ENCODE measurements at regions of chr11 and their contacts with region 1.

Region 1: GRCh38 chr11:44095506-44096394 is at the start of gene EXT2:
- DNase-seq: peak; percentile 85
- ATAC-seq: peak; percentile 94
- H3K4me3 Mint-ChIP-seq: peak within 1 kb of the TSS; percentile 87
- H3K27ac Mint-ChIP-seq: no peak within 1 kb of the TSS
- H3K4me1 Mint-ChIP-seq: peaks cover 24% of the 10 kb centered on the region
- H3K27me3 Mint-ChIP-seq: no peaks in the 10 kb centered on the region
- CTCF ChIP-seq: no peak
- total RNA-seq, gene EXT2: 21.9 and 22.1 TPM in 2 replicates

Region 2: DNA sequence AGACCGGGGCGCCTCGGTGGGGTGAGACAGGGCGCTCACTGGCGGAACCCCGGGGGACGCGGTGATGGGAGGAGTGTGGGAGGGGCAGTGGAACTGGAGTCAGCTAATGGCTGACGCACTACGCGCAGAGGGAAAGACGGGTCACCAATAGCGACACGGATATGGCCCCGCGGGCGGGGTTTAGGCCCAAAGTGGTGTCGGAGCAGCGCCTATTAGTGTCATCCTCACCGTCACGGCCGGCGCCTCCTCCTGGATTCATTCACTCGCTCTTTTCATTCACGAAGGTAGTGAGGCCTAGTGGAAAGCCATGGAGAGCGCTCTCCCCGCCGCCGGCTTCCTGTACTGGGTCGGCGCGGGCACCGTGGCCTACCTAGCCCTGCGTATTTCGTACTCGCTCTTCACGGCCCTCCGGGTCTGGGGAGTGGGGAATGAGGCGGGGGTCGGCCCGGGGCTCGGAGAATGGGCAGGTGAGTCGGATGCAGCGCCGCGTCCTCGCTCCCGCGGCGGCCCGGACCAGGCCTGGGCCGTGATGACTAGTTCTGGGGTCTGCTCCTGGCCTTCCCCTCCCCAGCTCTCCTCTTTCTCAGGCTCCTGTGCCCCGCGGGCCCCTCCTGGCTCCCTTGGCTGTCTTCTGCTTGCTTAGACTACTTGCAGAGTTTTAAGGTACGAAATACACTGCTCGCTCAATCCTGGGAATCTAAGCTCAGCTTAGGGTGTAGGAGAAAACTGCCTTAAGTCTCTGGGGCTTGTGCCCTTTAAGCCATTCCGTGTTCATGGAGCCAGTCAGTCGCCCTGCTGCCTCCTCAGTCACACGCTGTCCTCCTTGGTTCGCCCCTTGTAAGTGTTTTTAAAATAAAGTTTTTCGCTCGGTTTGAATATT is 415.0 kb before region 1 on chr11 and contains the start of gene HSD17B12:
- CTCF ChIA-PET with region 1: no interaction called
- POLR2A ChIA-PET with region 1: no interaction called
- intact Hi-C with region 1: loop called (anchors 5 kb)
- DNase-seq: peak; percentile 96
- ATAC-seq: peak; percentile 96
- H3K4me3 Mint-ChIP-seq: peak within 1 kb of the TSS; percentile 93
- H3K27ac Mint-ChIP-seq: peak within 1 kb of the TSS; percentile 92
- H3K4me1 Mint-ChIP-seq: peaks cover 38% of the 10 kb centered on the region
- H3K27me3 Mint-ChIP-seq: no peaks in the 10 kb centered on the region
- CTCF ChIP-seq: no peak
- total RNA-seq, gene HSD17B12: 56.8 and 58.3 TPM in 2 replicates

Region 3: GRCh38 chr11:43880640-43881159 is 215.1 kb before region 1 on chr11 and contains the start of gene ALKBH3:
- CTCF ChIA-PET with region 1: no interaction called
- POLR2A ChIA-PET with region 1: no interaction called
- intact Hi-C with region 1: loop called (anchors 10 kb)
- DNase-seq: peak; percentile 83
- ATAC-seq: peak; percentile 99
- H3K4me3 Mint-ChIP-seq: peak within 1 kb of the TSS; percentile 94
- H3K27ac Mint-ChIP-seq: peak within 1 kb of the TSS; percentile 74
- H3K4me1 Mint-ChIP-seq: peaks cover 20% of the 10 kb centered on the region
- H3K27me3 Mint-ChIP-seq: peaks cover 32% of the 10 kb centered on the region
- CTCF ChIP-seq: no peak
- total RNA-seq, gene ALKBH3: 28.3 and 40.5 TPM in 2 replicates

Region 4: DNA sequence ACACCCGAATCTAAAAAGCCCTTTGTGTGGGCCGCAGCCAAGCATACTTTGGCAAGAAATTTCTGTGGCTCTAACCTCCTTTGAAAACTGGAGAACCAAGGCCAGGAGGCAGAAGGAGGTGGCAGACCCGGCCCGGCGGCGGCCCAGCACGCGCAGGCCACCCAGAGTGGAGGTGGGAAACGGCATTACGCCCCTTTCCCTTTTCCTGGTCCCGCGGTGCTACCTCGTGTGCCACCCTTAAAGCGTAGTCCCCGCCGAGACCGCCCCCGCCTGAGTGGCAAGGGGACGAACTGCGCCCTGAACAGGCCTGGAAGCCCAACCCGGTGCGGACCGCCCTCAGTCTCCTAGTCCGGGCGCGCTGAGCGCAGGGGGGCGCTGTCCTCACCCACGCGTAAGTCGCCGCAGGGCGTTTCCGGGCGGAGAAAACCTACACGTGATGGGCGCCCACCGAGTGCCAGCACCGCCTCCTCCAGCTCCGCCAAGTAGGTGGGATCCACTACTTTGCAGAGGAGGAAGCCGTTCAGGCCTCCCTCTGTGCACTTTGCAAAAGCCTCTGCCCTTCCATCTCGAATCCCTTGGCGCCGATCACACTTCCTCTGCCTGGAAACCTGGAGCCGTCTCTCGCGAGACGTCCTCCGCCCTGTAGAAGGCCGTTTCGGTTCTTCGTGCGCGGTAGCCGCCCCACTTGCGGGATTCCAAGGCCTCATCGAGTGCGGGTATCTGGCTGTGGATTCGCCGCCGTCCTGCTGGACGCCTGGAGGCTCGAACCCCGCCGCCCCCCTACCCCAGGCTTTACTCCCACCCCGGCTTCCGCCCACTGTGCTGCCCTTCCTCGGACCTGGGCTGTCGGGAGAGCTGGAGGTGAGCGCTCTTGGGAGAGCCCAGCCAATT is 29.7 kb before region 1 on chr11 and contains the start of gene ACCS:
- CTCF ChIA-PET with region 1: interaction called, 10 read pairs
- POLR2A ChIA-PET with region 1: interaction called, 3 read pairs
- intact Hi-C with region 1: loop called (anchors 1 kb)
- DNase-seq: peak; percentile 86
- ATAC-seq: peak; percentile 97
- H3K4me3 Mint-ChIP-seq: peak within 1 kb of the TSS; percentile 92
- H3K27ac Mint-ChIP-seq: peak within 1 kb of the TSS; percentile 87
- H3K4me1 Mint-ChIP-seq: peaks cover 19% of the 10 kb centered on the region
- H3K27me3 Mint-ChIP-seq: no peaks in the 10 kb centered on the region
- CTCF ChIP-seq: peak; percentile 58
- total RNA-seq, gene ACCS: 22.4 and 27.0 TPM in 2 replicates

Region 5: DNA sequence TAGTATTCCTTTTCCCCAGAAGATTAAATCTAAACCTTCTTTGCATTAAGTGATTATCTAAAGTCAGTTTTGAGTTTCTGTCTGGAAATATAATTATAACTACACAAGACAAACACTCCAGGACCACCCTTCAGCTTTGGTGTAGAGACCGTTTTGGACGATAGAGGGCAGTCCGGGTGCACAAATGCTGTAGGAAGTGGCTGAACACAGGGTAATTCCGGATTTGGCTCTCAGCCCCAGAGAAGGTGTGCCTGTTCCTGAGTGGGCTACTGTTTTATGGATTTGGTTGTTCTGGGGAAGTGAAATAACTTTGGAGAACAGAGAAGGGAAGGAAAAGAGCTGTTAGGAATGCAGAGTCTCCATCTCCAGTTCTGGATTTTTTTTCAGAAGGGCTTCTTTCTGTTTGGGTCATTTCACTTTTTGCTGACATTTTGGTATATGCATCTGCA is 14.5 kb after region 1 on chr11:
- CTCF ChIA-PET with region 1: interaction called, 38 read pairs
- POLR2A ChIA-PET with region 1: interaction called, 6 read pairs
- intact Hi-C with region 1: loop called (anchors 1 kb)
- DNase-seq: peak; percentile 26
- ATAC-seq: peak; percentile 96
- H3K4me3 Mint-ChIP-seq: no peak overlapping the region
- H3K27ac Mint-ChIP-seq: no peak overlapping the region
- H3K4me1 Mint-ChIP-seq: peaks cover 5% of the 10 kb centered on the region
- H3K27me3 Mint-ChIP-seq: no peaks in the 10 kb centered on the region
- CTCF ChIP-seq: peak; percentile 68

Region 6: GRCh38 chr11:44538375-44539054 is 442.8 kb after region 1 on chr11:
- CTCF ChIA-PET with region 1: interaction called, 3 read pairs
- POLR2A ChIA-PET with region 1: no interaction called
- intact Hi-C with region 1: loop called (anchors 1 kb)
- DNase-seq: peak; percentile 67
- ATAC-seq: peak; percentile 97
- H3K4me3 Mint-ChIP-seq: no peak overlapping the region
- H3K27ac Mint-ChIP-seq: no peak overlapping the region
- H3K4me1 Mint-ChIP-seq: peaks cover 3% of the 10 kb centered on the region
- H3K27me3 Mint-ChIP-seq: peaks cover 19% of the 10 kb centered on the region
- CTCF ChIP-seq: peak; percentile 37

Region 7: DNA sequence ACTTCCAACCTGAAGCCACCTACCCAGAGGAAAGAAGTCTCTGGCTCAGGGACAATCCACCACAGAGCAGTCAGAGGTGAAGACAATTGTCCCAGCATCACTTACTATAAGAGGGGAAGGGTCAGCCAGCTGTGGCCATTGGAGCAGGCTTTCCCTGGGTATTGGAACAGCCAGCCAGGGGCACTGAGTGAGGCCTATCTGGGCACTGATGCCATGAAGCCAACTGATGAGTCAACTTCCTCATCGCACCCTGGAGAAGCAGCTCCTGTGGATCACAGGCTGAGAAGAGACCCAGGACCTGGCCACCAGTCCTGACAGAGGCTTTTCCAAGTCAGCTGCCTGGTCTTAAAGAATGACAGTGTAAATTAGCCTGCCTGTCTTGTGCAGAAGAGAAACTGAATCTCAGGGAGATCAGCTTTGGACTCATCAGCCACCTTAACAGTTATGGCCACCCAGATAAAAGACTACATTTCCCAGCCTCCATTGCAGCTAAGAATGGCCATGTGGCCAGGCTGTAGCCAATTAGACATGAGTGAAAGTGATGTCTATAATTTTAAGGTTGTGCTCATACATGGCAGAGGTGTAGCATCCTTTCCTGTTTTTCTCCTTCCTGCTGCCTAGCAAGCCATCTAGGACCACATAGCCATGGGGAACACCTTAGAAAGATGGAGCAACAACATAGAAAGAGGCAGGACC is 1550.7 kb after region 1 on chr11:
- CTCF ChIA-PET with region 1: no interaction called
- POLR2A ChIA-PET with region 1: no interaction called
- intact Hi-C with region 1: no loop called
- DNase-seq: no peak
- ATAC-seq: no peak
- H3K4me3 Mint-ChIP-seq: no peak overlapping the region
- H3K27ac Mint-ChIP-seq: no peak overlapping the region
- H3K4me1 Mint-ChIP-seq: no peaks in the 10 kb centered on the region
- H3K27me3 Mint-ChIP-seq: peaks cover 19% of the 10 kb centered on the region
- CTCF ChIP-seq: no peak